ENCODE measurements at regions of chr1 and their contacts with region 1.

Region 1: DNA sequence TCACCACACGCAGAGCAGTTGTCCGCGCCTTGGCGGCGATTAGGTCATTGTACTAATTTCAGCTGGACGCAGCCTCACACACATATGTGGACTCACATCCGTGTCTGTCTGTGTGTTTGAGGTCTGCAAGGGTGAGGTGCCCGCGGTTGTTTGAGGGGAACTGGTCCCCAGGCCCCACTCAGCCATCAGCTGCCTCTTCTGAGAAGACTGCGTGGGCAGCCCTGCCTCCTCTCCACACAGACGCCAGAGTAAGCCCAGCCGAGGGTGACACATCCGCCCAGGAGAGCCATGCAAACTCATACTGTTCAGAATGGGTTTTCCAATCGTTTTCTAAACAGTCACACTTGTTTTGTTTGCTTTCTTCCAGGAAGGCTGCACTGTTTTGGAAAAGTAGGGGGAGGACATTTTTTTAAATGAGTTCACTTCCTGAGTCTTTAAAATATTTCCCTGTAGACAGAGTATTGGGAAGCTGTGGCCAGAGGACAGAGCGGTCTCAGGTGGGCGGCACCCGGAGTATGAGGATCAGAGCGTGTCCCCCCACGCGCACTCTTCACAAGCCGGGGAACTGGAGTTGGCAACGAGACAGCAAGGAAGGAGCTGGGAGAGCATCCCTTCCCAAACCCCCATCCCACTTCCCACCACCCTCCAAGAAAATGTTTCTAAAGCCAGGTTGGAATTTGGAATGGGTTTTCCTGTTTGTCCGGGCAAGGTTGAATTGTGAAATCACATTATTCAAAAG is 53.3 kb downstream of the TOMM20 start:
- DNase-seq: peak; percentile 95
- H3K4me3 Mint-ChIP-seq: peak overlapping the region; percentile 74
- H3K27ac Mint-ChIP-seq: peak overlapping the region; percentile 99
- H3K4me1 Mint-ChIP-seq: peaks cover 32% of the 10 kb centered on the region
- H3K27me3 Mint-ChIP-seq: no peaks in the 10 kb centered on the region

Region 2: GRCh38 chr1:234486498-234487448 is 588.6 kb before region 1 on chr1:
- CTCF ChIA-PET with region 1: no interaction called
- POLR2A ChIA-PET with region 1: no interaction called
- intact Hi-C with region 1: loop called (anchors 1 kb)
- DNase-seq: peak; percentile 55
- H3K4me3 Mint-ChIP-seq: no peak overlapping the region
- H3K27ac Mint-ChIP-seq: peak overlapping the region; percentile 81
- H3K4me1 Mint-ChIP-seq: peaks cover 36% of the 10 kb centered on the region
- H3K27me3 Mint-ChIP-seq: peaks cover 16% of the 10 kb centered on the region

Region 3: GRCh38 chr1:234730770-234731568 is 344.4 kb before region 1 on chr1:
- CTCF ChIA-PET with region 1: interaction called, 3 read pairs
- POLR2A ChIA-PET with region 1: interaction called, 3 read pairs
- intact Hi-C with region 1: loop called (anchors 1 kb)
- DNase-seq: peak; percentile 78
- H3K4me3 Mint-ChIP-seq: peak overlapping the region; percentile 40
- H3K27ac Mint-ChIP-seq: peak overlapping the region; percentile 99
- H3K4me1 Mint-ChIP-seq: peaks cover 77% of the 10 kb centered on the region
- H3K27me3 Mint-ChIP-seq: no peaks in the 10 kb centered on the region

Region 4: GRCh38 chr1:234842726-234843641 is 232.4 kb before region 1 on chr1:
- CTCF ChIA-PET with region 1: interaction called, 3 read pairs
- POLR2A ChIA-PET with region 1: interaction called, 5 read pairs
- intact Hi-C with region 1: loop called (anchors 1 kb)
- DNase-seq: peak; percentile 93
- H3K4me3 Mint-ChIP-seq: peak overlapping the region; percentile 71
- H3K27ac Mint-ChIP-seq: peak overlapping the region; percentile 99
- H3K4me1 Mint-ChIP-seq: peaks cover 87% of the 10 kb centered on the region
- H3K27me3 Mint-ChIP-seq: no peaks in the 10 kb centered on the region

Region 5: GRCh38 chr1:234963180-234963903 is 112.0 kb before region 1 on chr1:
- CTCF ChIA-PET with region 1: interaction called, 3 read pairs
- POLR2A ChIA-PET with region 1: interaction called, 6 read pairs
- intact Hi-C with region 1: loop called (anchors 1 kb)
- DNase-seq: peak; percentile 97
- H3K4me3 Mint-ChIP-seq: peak overlapping the region; percentile 63
- H3K27ac Mint-ChIP-seq: peak overlapping the region; percentile 98
- H3K4me1 Mint-ChIP-seq: peaks cover 67% of the 10 kb centered on the region
- H3K27me3 Mint-ChIP-seq: no peaks in the 10 kb centered on the region

Region 6: GRCh38 chr1:235018161-235018560 is 57.2 kb before region 1 on chr1:
- CTCF ChIA-PET with region 1: interaction called, 4 read pairs
- POLR2A ChIA-PET with region 1: interaction called, 23 read pairs
- intact Hi-C with region 1: loop called (anchors 1 kb)
- DNase-seq: no peak
- H3K4me3 Mint-ChIP-seq: no peak overlapping the region
- H3K27ac Mint-ChIP-seq: peak overlapping the region; percentile 66
- H3K4me1 Mint-ChIP-seq: peaks cover 74% of the 10 kb centered on the region
- H3K27me3 Mint-ChIP-seq: no peaks in the 10 kb centered on the region

Region 7: GRCh38 chr1:235050911-235051360 is 24.4 kb before region 1 on chr1:
- CTCF ChIA-PET with region 1: no interaction called
- POLR2A ChIA-PET with region 1: interaction called, 5 read pairs
- intact Hi-C with region 1: loop called (anchors 1 kb)
- DNase-seq: peak; percentile 76
- H3K4me3 Mint-ChIP-seq: no peak overlapping the region
- H3K27ac Mint-ChIP-seq: peak overlapping the region; percentile 74
- H3K4me1 Mint-ChIP-seq: peaks cover 51% of the 10 kb centered on the region
- H3K27me3 Mint-ChIP-seq: no peaks in the 10 kb centered on the region

Measured in activated CD4-positive, alpha-beta memory T cell treated with anti-CD3 and anti-CD28 coated beads for 36 hours (primary cell).